ENCODE measurements at regions of chr2 and their contacts with region 1.

Region 1: GRCh38 chr2:11411768-11412448 is 54.1 kb downstream of the E2F6 start:
- DNase-seq: peak in 4 of 5 donors; percentile 50 to 72 (median 58)
- H3K4me3 ChIP-seq: peak overlapping the region; percentile 22
- H3K27ac ChIP-seq: no peak overlapping the region
- H3K4me1 ChIP-seq: peaks cover 6% of the 10 kb centered on the region
- H3K27me3 ChIP-seq: no peaks in the 10 kb centered on the region
- CTCF ChIP-seq: peak; percentile 44 to 80 (median 79)
- EP300 ChIP-seq: no peak
- POLR2A ChIP-seq: no peak

Region 2: DNA sequence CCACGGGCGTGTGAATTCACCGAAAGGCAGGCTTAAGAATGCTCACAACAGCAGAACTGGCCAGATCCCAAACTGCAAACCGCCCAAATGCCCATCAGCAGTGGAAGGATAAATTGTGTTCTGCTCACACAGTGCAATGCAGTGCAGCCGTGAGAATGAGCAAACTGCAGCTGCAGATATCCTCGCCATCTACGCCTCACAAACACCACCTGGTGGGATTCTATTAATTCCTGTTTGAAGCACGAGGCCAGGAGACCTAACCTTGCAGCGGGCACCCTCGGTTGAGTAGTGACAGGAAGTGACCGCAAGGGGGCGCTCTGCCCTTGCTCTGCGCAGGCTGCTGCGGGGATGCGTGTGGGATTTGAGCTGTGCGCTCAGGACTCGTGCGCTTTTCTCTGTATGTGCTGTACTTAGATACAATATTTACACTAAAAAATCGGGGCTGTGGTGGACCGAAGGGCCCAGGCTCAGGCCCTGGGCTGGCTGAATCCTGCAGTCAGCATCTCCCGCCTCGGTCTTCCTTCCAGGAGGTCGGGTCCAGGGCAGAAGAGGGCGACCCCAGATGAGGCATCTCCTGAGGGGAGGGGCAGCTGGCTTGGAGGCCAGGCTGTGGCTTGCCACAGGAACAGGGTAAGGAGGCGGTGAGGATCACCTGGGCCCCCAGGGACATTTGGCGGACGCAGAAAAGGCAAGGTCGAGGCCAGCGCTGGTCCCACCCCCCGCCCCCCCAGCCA is 579.5 kb before region 1 on chr2:
- intact Hi-C with region 1: loop called in 1 of 4 experiments (anchors 10 kb)
- DNase-seq: peak; percentile 68 to 88 (median 82)
- H3K4me3 ChIP-seq: no peak overlapping the region
- H3K27ac ChIP-seq: no peak overlapping the region
- H3K4me1 ChIP-seq: peaks cover 2% of the 10 kb centered on the region
- H3K27me3 ChIP-seq: no peaks in the 10 kb centered on the region
- CTCF ChIP-seq: peak; percentile 77 to 96 (median 83)
- EP300 ChIP-seq: no peak
- POLR2A ChIP-seq: no peak

Region 3: DNA sequence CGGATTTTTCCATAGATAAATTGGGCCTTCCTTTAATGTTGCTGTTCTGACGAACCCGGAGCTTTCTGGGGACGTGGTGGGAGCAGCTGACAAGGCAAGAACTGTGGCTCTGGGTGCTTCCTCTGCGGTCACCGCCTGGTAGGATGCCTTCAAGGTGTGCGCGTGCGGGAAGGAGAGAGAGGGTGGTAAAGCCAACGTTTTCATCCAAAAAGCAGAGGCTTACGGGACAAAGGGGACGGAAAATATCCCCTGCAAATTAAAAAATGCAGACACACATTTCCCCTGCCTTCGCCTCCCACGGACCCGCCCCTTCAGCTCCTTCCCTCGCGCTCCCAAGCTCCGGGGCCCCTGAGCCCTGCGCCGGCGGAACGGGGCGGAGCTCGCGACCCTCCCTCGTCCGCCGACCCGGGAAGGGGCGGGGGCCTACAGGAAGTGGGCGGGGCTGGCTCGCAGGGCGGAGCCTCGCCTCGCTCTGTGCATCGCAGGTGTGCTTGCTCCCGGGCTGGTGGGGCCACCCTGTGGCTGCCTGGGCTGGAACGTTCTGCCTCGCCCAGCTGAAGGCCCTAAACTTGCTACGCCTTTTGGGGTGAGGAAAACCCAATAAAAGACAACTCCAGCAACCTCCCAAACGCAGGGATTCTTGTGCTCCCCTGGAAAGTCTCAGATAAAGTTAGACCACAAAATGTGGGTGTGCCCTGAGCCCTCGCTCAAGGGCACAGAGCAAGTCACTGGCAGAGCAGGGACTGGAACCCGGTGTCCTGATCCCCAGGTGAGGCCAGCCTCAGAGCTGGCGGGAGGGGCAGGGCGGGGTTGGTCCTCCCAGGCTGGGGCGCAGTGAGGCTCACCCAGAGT is 282.1 kb before region 1 on chr2:
- intact Hi-C with region 1: loop called in 3 of 4 experiments (anchors 5 to 10 kb)
- DNase-seq: peak; percentile 65 to 83 (median 78)
- H3K4me3 ChIP-seq: peak overlapping the region; percentile 27
- H3K27ac ChIP-seq: peak overlapping the region in 1 of 2 donors; percentile 37
- H3K4me1 ChIP-seq: peaks cover 6% of the 10 kb centered on the region
- H3K27me3 ChIP-seq: no peaks in the 10 kb centered on the region
- CTCF ChIP-seq: no peak
- EP300 ChIP-seq: no peak
- POLR2A ChIP-seq: no peak

Region 4: DNA sequence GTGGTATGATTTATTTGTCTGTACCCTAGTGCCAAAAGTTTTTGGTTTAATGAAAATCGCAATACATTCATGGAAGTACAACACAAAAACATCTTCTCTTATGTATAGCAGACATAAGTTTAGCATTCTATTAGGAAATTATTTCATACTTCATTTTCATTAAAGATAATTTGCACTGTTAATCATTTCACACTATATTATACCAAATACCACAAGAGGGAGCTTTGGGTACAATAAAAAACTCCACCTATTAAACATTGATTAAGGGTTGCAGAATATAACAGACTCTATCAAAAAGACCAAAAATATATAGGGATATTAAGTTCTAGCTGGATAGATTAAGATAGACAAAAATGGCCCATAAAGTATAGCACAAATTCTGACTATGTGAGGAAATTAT is 177.6 kb before region 1 on chr2:
- intact Hi-C with region 1: loop called in 3 of 4 experiments (anchors 5 to 10 kb)
- DNase-seq: no peak
- H3K4me3 ChIP-seq: no peak overlapping the region
- H3K27ac ChIP-seq: no peak overlapping the region
- H3K4me1 ChIP-seq: peaks cover 2% of the 10 kb centered on the region
- H3K27me3 ChIP-seq: no peaks in the 10 kb centered on the region
- CTCF ChIP-seq: peak; percentile 17 to 54 (median 25)
- EP300 ChIP-seq: no peak
- POLR2A ChIP-seq: no peak

Region 5: GRCh38 chr2:11239666-11240462 is 172.0 kb before region 1 on chr2:
- intact Hi-C with region 1: loop called in 2 of 4 experiments (anchors 5 to 10 kb)
- DNase-seq: no peak
- H3K4me3 ChIP-seq: no peak overlapping the region
- H3K27ac ChIP-seq: no peak overlapping the region
- H3K4me1 ChIP-seq: peaks cover 2% of the 10 kb centered on the region
- H3K27me3 ChIP-seq: no peaks in the 10 kb centered on the region
- CTCF ChIP-seq: no peak
- EP300 ChIP-seq: no peak
- POLR2A ChIP-seq: no peak

Region 6: DNA sequence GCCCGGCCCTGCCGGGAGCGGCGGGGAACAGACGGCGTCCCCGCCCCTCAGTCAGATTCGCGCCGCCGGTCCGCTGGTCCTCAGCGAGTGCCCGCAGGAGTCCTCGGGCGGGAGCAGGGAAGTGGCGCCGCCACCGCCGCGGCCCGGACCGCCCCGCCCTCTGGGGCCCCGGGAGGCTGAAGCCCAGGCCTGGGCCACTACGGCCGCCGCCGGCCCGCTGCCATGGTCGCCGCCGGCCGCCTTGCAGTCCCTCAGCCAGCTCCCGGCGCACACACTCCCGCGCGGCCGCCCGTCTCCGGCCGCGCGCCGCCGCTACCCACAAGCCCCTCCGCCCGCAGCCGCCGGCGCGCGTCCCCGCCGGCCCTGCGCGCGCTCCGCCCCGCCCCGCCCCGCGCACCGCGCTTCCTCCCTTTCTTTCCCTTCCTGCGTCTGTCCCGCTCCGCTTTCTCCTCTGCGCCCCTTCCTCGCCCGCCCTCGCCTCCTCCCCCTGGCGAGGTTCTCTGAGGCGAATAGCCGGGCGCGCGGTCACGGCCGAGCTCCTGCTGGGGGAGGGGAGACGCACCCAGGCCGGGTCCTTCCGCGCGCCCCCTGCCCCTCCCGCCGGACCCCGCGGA is 67.5 kb before region 1 on chr2 and contains the start of gene ROCK2:
- intact Hi-C with region 1: loop called in 1 of 4 experiments (anchors 5 kb)
- DNase-seq: peak; percentile 88 to 93 (median 89)
- H3K4me3 ChIP-seq: peak within 1 kb of the TSS; percentile 83
- H3K27ac ChIP-seq: peak within 1 kb of the TSS; percentile 95 to 100
- H3K4me1 ChIP-seq: peaks cover 3% of the 10 kb centered on the region
- H3K27me3 ChIP-seq: no peaks in the 10 kb centered on the region
- CTCF ChIP-seq: no peak
- EP300 ChIP-seq: no peak
- POLR2A ChIP-seq: peak; percentile 53
- total RNA-seq, gene ROCK2: 40.1 to 71.9 (median 52.7) TPM